H1 (cell line): ENCODE measurements at regions of chr17 and their contacts with region 1.

Region 1: DNA sequence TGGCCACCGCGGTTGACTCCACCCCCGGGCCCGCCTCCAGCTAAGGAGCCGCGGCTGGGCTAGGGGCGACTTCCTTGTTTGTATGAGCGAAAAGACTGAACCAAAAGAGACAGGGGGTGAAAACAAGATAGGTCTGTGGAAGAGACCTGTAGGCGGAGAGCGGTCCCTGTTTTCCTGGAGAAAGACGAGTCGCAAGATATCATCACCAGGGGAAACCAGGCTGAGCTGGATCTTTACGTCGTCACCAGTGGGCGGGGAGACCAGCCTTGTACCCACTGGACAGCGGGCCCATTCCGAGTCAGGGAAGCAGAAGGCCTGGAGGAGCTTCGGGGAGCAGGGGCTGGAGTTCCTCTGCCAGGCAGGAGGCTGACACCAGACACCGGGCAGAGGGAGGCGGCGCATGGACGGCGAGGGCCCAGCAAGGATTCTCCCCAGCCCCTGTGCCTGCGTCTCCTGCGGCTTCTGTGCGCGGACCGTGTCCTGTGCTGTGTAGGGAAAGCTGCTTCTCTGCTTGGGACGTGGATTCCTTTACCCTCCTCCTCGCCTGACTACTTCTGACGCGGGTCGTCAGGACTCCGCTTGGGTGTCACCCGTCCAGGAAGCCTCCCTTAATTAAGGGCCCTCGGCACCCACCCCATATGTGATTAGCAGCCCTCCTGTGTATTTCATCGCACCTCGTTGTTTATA is 10.3 kb upstream of the ARL4D start:
- DNase-seq: peak in 1 of 2 experiments; percentile 93
- H3K4me3 ChIP-seq: peak overlapping the region; percentile 58 to 81 (median 70)
- H3K27ac ChIP-seq: peak overlapping the region; percentile 85
- H3K4me1 ChIP-seq: peaks cover 0 to 3% (median 0%) of the 10 kb centered on the region in 4 experiments; a peak in 3 of 7 replicates
- H3K27me3 ChIP-seq: no peaks in the 10 kb centered on the region
- CTCF ChIP-seq: no peak
- EP300 ChIP-seq: peak in 1 of 2 experiments; percentile 55; a peak in 1 of 3 replicates
- POLR2A ChIP-seq: peak in 1 of 2 experiments; percentile 61; a peak in 1 of 3 replicates
- RAD21 ChIP-seq: no peak

Region 2: DNA sequence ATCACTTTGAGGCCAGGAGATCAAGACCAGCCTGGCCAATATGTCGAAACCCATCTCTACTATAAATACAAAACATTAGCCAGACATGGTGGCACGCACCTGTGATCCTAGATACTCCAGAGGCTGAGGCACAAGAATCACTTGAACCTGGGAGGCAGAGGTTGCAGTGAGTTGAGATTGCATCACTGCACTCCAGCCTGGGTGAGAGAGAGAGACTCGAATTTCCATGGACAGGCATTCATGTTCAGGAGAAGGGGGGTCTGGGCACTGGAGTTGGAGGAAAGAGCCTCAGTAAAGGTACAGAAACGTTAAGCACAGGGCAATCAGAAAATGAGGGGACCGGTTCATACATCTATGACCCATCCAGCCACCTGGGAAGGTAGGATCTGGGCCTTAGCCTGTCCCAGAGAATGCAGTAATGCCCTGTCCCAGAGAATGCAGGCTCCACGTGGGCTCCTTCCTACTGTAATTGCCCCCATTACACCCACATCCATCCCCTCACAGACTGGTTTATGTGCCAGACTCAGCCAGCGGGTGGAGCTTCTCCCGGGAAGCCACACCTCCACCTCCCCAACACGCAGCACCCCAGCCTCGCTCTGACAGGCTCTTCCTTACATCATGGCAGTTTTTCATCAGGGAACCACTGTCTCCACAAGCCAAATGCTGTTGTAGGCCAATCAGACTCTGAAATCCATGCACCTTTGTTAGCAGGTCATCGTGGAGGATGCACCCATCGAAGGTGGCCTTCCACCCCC is 11.3 kb before region 1 on chr17:
- CTCF ChIA-PET with region 1: interaction called, 17 read pairs
- POLR2A ChIA-PET with region 1: interaction called, 184 read pairs
- DNase-seq: peak in 1 of 2 experiments; percentile 63
- H3K4me3 ChIP-seq: no peak overlapping the region
- H3K27ac ChIP-seq: no peak overlapping the region
- H3K4me1 ChIP-seq: peaks cover 0 to 3% (median 0%) of the 10 kb centered on the region in 4 experiments; a peak in 2 of 7 replicates
- H3K27me3 ChIP-seq: no peaks in the 10 kb centered on the region
- CTCF ChIP-seq: no peak
- EP300 ChIP-seq: no peak
- POLR2A ChIP-seq: no peak
- RAD21 ChIP-seq: no peak

Region 3: DNA sequence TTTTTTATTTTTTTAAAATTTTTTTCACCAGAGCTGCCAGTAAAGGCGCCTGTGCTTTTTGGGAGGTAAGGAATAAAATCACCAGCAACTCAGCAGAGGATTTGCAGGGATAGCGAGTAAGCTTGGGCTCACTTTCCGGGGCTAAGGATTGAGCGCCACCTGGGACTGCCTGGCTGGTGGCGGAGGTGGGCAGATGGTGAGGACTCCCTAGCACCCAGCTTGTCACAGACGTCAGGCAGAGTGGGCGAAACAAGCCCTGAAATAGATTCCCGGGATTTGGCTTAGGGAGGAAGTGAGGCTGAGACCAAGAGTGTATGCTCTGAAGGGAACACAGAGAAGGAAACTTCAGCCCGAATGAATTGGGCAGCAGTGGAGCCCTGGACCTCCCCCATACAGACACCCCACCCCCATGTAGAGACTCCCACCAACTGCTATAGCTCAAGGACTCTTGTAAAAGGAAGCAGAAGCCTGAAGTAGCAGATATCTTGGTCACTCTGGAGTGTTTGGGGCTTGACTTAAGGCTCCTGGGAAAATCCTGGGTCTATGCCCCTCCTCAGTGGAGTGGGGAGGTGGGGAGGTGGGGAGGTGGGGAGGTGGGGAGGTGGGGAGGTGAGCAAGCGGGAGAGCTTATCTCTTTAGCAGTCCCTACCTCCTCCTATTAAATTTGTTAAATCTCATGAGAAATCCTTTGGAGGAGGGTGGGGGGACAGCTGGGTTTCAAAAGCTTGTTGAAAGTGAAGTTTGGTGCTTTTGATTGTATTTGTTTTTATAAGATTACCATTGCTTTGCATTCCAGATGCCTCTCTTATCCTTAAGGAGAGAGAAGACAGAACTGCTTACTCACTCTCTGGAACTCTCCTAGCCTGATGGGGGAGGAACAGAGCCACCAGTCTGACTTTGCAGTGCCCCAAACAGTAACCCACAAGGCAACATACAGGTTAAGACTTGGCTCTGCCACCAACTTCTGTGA is 18.5 kb after region 1 on chr17:
- CTCF ChIA-PET with region 1: interaction called, 20 read pairs
- POLR2A ChIA-PET with region 1: interaction called, 5 read pairs
- DNase-seq: no peak
- H3K4me3 ChIP-seq: no peak overlapping the region
- H3K27ac ChIP-seq: no peak overlapping the region
- H3K4me1 ChIP-seq: peaks cover 0 to 6% (median 2%) of the 10 kb centered on the region in 4 experiments; a peak in 3 of 7 replicates
- H3K27me3 ChIP-seq: no peaks in the 10 kb centered on the region
- CTCF ChIP-seq: no peak
- EP300 ChIP-seq: no peak
- POLR2A ChIP-seq: no peak
- RAD21 ChIP-seq: no peak

Region 4: GRCh38 chr17:43428524-43428923 is 40.0 kb after region 1 on chr17:
- CTCF ChIA-PET with region 1: interaction called, 132 read pairs
- POLR2A ChIA-PET with region 1: no interaction called
- DNase-seq: no peak
- H3K4me3 ChIP-seq: no peak overlapping the region
- H3K27ac ChIP-seq: no peak overlapping the region
- H3K4me1 ChIP-seq: peaks cover 0 to 4% (median 0%) of the 10 kb centered on the region in 4 experiments; a peak in 1 of 7 replicates
- H3K27me3 ChIP-seq: no peaks in the 10 kb centered on the region
- CTCF ChIP-seq: peak; percentile 18 to 21 (median 20)
- EP300 ChIP-seq: no peak
- POLR2A ChIP-seq: no peak
- RAD21 ChIP-seq: peak; percentile 32 to 36; a peak in 2 of 4 replicates